ENCODE measurements at regions of chr1 and their contacts with region 1.

Region 1: DNA sequence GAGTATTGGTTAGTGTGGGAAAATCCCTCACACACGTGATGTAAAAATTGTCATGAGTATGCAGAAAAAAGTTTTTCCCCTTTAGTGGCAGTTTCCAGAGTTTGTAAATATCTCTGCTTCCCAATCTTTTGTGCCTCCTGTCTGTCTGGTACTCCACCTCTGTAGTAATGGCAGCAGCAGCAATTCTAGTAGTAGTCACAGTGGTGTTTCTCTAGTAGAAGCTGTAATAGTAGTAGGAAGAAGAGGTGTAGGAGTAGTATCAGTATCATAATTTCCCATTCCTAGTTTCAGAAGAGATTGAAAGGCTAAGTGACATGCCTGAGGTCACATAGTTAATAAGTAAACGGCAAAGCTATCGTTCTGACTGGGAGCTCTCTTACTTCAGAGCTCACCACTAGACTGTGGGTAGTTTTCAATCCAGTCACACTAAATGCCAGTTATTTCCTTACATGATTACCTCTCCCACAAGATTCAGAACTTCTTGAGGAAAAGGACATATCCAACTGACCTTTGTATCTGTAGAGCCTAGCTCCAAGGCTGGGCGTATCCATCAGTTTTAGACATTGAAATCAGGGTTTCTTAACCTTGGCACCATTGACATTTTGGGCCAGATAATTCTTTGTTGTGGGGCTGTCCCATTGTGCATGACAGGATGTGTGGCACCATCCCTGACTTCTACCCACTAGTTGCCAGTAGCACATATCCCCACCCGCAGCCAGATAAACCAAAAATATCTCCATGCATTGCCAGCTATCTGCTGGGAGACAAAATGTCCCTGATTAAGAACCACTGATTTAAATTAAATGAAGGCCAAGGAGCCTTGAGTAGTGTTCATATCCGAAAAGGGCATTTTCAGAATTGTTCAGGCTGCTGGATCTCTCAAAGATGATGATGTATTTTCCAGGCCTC is 135.9 kb downstream of the FGGY start:
- DNase-seq: peak; percentile 15
- H3K4me3 Mint-ChIP-seq: no peak overlapping the region
- H3K27ac Mint-ChIP-seq: peak overlapping the region; percentile 19
- H3K4me1 Mint-ChIP-seq: peaks cover 27% of the 10 kb centered on the region
- H3K27me3 Mint-ChIP-seq: no peaks in the 10 kb centered on the region

Region 2: DNA sequence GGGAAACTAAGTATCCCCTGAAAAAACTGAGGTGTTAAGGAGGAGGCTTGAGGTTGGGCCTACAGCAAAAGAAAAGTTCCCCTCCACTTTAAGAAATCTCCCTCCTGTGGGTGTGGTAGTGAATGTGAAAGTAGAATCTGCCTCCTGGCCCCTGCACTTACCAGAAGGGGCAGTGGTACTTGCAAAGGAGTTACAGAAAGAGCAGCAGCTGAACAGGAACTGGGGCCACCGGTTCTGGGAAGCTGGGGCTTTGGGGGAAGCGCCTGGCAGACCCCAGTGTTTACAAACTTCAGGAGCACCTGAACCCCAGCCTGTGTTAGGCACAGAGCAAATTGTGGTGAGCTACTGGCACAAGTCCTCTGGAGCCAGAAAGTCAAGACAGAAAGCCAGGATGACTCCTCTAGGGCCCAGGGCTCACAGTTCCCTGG is 386.0 kb before region 1 on chr1:
- CTCF ChIA-PET with region 1: no interaction called
- POLR2A ChIA-PET with region 1: no interaction called
- intact Hi-C with region 1: loop called (anchors 10 kb)
- DNase-seq: peak; percentile 64
- H3K4me3 Mint-ChIP-seq: no peak overlapping the region
- H3K27ac Mint-ChIP-seq: peak overlapping the region; percentile 64
- H3K4me1 Mint-ChIP-seq: peaks cover 33% of the 10 kb centered on the region
- H3K27me3 Mint-ChIP-seq: no peaks in the 10 kb centered on the region

Region 3: GRCh38 chr1:59354709-59355337 is 78.0 kb before region 1 on chr1:
- CTCF ChIA-PET with region 1: no interaction called
- POLR2A ChIA-PET with region 1: no interaction called
- intact Hi-C with region 1: loop called (anchors 2 kb)
- DNase-seq: peak; percentile 38
- H3K4me3 Mint-ChIP-seq: no peak overlapping the region
- H3K27ac Mint-ChIP-seq: peak overlapping the region; percentile 59
- H3K4me1 Mint-ChIP-seq: peaks cover 8% of the 10 kb centered on the region
- H3K27me3 Mint-ChIP-seq: no peaks in the 10 kb centered on the region

Region 4: GRCh38 chr1:59477286-59477685 is 44.5 kb after region 1 on chr1:
- CTCF ChIA-PET with region 1: no interaction called
- POLR2A ChIA-PET with region 1: no interaction called
- intact Hi-C with region 1: loop called (anchors 1 kb)
- DNase-seq: peak; percentile 80
- H3K4me3 Mint-ChIP-seq: no peak overlapping the region
- H3K27ac Mint-ChIP-seq: peak overlapping the region; percentile 43
- H3K4me1 Mint-ChIP-seq: peaks cover 15% of the 10 kb centered on the region
- H3K27me3 Mint-ChIP-seq: no peaks in the 10 kb centered on the region

Measured in activated CD4-positive, alpha-beta memory T cell treated with anti-CD3 and anti-CD28 coated beads for 36 hours (primary cell).